Endothelial cell of umbilical vein (primary cell): ENCODE measurements at regions of chr22 and their contacts with region 1.

Region 1: GRCh38 chr22:22748297-22748743 is 103.9 kb downstream of the GGTLC2 start:
- DNase-seq: peak; percentile 38
- H3K4me3 ChIP-seq: no peak overlapping the region
- H3K27ac ChIP-seq: no peak overlapping the region
- H3K4me1 ChIP-seq: no peaks in the 10 kb centered on the region
- H3K27me3 ChIP-seq: no peaks in the 10 kb centered on the region
- CTCF ChIP-seq: peak; percentile 68 to 77
- POLR2A ChIP-seq: no peak

Region 2: DNA sequence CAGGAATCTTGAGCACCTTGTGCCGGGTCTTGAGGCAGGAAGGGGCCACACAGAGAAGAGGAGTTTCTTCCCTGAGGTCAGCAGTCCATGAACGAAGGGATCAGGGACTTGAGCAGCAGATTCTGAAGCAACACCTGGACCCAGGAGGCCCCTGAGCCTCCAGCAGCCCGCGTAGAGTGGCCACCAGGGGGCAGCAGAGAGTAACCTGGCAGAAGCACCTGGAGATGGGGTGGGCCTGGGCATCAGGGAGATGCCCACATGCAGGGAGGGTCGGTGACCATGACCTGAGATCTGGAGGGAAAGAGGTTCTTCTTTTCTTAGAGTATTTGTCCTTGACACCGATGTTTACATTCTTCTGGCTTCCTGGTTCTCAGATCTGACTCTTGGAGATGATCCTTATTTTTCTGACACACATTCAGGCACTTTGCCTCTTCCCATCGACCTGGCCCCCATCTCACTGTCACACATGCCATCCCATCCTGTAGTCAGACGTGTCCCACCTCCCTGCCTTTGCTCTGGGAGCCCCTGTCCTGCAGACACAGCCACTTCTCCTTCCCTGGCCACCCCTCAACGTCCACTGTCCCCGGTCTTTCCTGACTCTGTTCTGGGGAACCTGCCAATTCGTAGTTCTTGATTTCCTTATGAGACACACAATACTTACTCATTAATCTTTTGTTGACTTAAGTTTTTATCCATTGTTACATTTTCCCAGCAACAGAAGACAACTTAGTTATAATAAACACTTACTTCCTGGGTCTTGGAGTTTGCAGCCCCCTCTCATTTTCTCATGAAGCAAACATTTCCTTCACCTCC is 37.4 kb before region 1 on chr22:
- CTCF ChIA-PET with region 1: interaction called, 11 read pairs
- POLR2A ChIA-PET with region 1: no interaction called
- dilution Hi-C with region 1: no loop called
- intact Hi-C with region 1: loop called (anchors 5 kb)
- DNase-seq: peak; percentile 41
- H3K4me3 ChIP-seq: no peak overlapping the region
- H3K27ac ChIP-seq: no peak overlapping the region
- H3K4me1 ChIP-seq: no peaks in the 10 kb centered on the region
- H3K27me3 ChIP-seq: peaks cover 0 to 2% of the 10 kb centered on the region in 2 experiments
- CTCF ChIP-seq: peak; percentile 90 to 97
- POLR2A ChIP-seq: no peak